ENCODE measurements at regions of chr10 and their contacts with region 1.

Region 1: DNA sequence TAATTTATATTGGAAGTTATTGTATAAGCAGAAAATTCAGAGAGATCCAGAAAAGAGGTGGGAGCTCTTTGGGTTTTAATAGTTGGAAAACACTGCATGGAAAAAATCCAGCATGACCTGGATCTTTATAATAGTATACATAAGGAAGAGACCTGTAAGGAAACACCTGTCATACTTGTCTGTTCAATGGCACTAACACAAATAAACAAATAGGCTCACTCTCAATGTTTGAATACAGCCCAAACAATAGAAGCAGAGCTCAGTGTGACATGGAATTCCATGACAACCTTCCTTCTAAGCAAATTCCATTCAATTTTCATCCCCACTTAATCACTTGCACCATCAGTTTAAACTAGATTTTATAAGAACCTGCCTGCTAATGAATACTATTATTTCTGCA is 31.7 kb downstream of the CISD1 start:
- DNase-seq: no peak
- ATAC-seq: no peak
- H3K4me3 ChIP-seq: no peak overlapping the region
- H3K27ac ChIP-seq: no peak overlapping the region
- H3K4me1 ChIP-seq: no peaks in the 10 kb centered on the region
- H3K27me3 ChIP-seq: 0 out of 2 replicates have a peak, but pooled peaks cover 2% of the 10 kb centered on the region
- CTCF ChIP-seq: no peak

Region 2: DNA sequence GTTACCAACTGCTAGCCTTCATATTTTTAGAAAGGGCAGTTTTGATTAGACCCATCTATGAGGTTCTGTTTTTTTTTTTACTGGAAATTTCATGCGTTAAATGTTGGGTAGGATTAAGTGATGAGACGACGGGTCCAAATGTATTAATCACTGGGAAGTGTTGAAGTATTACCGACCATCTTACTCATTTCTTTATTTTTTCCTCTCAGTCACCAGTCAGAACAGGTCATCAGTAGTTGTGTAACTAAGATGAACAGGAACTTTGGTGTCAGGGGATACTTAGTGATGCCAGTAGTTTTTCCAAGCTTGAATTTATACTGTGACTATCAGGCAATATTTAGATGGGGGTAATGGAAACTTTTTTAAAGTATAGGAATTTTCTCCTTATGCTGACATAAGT is 98.7 kb after region 1 on chr10:
- CTCF ChIA-PET with region 1: no interaction called
- POLR2A ChIA-PET with region 1: no interaction called
- in situ Hi-C with region 1: no loop called
- intact Hi-C with region 1: loop called (anchors 5 kb)
- DNase-seq: no peak
- ATAC-seq: no peak
- H3K4me3 ChIP-seq: no peak overlapping the region
- H3K27ac ChIP-seq: no peak overlapping the region
- H3K4me1 ChIP-seq: no peaks in the 10 kb centered on the region
- H3K27me3 ChIP-seq: no peaks in the 10 kb centered on the region
- CTCF ChIP-seq: no peak

Region 3: GRCh38 chr10:58513188-58514110 is 212.8 kb after region 1 on chr10:
- CTCF ChIA-PET with region 1: no interaction called
- POLR2A ChIA-PET with region 1: no interaction called
- in situ Hi-C with region 1: no loop called
- intact Hi-C with region 1: loop called (anchors 10 kb)
- DNase-seq: no peak
- ATAC-seq: peak; percentile 76
- H3K4me3 ChIP-seq: peak overlapping the region; percentile 46 to 56
- H3K27ac ChIP-seq: no peak overlapping the region
- H3K4me1 ChIP-seq: peaks cover 4% of the 10 kb centered on the region; the same call in 1 of the 2 replicates
- H3K27me3 ChIP-seq: peaks cover 34% of the 10 kb centered on the region
- CTCF ChIP-seq: no peak